ENCODE measurements at regions of chrX and their contacts with region 1.

Region 1: DNA sequence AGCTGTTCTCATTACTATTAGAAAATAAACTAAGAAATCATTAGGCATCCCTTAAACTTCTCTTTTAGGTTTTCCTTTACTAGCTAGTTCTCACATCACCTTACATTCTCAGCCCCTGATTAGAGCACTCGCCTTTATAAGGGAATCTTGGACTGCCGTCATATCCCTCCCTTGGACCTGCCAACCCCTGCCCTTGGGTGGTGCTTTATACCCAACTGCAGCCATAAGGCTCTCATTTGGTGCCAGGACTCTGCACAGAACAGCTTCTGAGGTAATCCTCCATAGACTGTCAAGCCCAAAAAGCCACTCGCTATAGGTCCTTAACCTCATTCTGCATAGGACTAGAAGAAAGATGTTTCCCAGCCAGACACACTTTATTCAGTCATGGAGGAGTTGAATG is 67.5 kb downstream of the NHSL2 start:
- H3K4me3 ChIP-seq: no peak overlapping the region
- H3K27ac ChIP-seq: no peak overlapping the region
- H3K4me1 ChIP-seq: no peaks in the 10 kb centered on the region
- CTCF ChIP-seq: no peak

Region 2: DNA sequence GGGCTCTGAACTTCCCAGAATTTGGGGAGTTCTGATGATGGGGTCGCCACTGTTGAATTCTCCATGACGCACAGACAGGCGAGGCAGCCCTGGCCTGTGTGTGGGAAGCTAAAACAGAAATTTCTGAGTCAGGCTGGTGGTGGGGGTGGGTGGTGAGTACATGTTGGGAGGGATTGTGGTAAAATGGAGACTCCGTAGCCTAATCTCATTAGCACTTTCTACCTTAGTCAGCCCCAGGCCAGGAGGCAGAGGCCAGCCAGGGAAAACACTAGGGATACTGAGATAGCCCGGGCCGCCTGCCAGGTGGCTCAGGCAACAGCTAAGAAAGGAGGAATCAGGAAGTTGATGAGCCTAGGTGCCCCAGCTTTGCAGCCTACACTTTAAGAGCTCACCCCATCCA is 106.8 kb before region 1 on chrX:
- CTCF ChIA-PET with region 1: no interaction called
- POLR2A ChIA-PET with region 1: no interaction called
- H3K4me3 ChIP-seq: no peak overlapping the region
- H3K27ac ChIP-seq: no peak overlapping the region
- H3K4me1 ChIP-seq: no peaks in the 10 kb centered on the region
- CTCF ChIP-seq: no peak

Region 3: GRCh38 chrX:73481521-73481920 is 1503.4 kb after region 1 on chrX:
- CTCF ChIA-PET with region 1: no interaction called
- POLR2A ChIA-PET with region 1: interaction called, 16 read pairs
- H3K4me3 ChIP-seq: no peak overlapping the region
- H3K27ac ChIP-seq: no peak overlapping the region
- H3K4me1 ChIP-seq: no peaks in the 10 kb centered on the region
- CTCF ChIP-seq: no peak

Measured in HEK293 (cell line).